ENCODE measurements at regions of chr2 and their contacts with region 1.

Region 1: DNA sequence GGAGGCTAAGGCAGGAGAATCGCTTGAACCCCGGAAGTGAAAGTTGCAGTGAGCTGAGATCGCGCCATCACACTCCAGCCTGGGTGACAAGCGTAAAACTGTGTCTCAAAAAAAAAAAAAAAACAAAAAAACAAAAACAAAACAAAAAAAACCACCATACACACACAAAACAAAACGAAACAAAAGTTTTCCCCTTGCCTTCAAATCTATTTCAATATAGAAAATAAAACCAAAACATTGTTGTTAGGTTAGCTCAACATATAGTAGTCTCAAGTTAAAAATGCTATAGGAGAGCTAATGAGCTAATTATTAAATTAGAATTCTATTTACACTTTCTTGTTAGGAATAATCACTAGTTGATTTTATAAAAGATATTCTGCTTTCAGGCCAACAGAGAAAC is 43.3 kb downstream of the FBXO11 start:
- DNase-seq: no peak
- H3K4me3 Mint-ChIP-seq: no peak overlapping the region
- H3K27ac Mint-ChIP-seq: no peak overlapping the region
- H3K4me1 Mint-ChIP-seq: peaks cover 60% of the 10 kb centered on the region
- H3K27me3 Mint-ChIP-seq: no peaks in the 10 kb centered on the region

Region 2: DNA sequence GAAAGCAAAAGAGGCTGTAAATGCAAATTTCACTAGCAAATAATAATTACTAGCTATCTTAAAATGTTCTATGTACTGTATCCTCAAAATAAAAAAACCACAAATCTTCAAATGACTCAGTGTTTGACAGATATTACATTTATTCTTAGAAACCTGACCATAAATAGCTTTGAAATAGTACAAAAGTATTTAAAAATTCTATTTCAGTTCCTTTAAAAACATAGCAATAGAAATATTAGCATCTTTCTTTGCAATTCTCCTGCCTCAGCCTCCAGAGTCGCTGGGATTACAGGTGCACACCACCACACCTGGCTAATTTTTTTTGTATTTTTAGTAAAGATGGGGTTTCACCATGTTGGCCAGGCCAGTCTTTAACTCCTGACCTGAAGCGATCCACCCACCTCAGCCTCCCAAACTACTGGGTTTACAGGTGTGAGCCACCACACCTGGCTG is 29.4 kb before region 1 on chr2:
- CTCF ChIA-PET with region 1: no interaction called
- POLR2A ChIA-PET with region 1: no interaction called
- intact Hi-C with region 1: no loop called
- DNase-seq: no peak
- H3K4me3 Mint-ChIP-seq: no peak overlapping the region
- H3K27ac Mint-ChIP-seq: no peak overlapping the region
- H3K4me1 Mint-ChIP-seq: no peaks in the 10 kb centered on the region
- H3K27me3 Mint-ChIP-seq: no peaks in the 10 kb centered on the region

Region 3: DNA sequence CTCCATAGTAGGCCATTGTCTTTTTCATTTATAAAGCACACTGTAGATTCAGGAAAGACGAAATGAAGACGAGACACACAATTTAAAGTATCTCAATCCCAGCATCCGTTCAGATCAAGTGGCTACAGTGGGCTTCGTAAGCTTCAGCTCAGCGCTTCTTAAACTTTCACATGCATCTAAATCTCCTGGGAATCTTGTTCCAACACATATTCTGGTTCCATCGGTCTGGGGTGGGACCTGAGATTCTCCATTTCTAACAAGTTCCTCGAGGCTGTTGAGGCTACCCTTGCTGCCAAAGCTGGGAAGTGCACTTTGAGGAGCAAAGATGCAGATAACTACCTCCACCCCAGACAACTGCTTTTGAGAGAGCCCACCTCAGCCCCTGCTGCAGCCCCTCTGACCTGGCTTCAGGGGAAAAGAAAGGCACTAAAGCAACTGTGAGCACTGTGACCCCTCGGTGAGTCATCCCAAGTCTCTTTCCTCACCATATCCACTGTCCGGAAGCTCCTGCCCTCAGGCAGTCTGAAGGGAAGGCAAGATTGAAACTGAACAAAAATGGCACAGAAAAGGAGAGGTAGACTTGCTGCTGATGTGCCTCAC is 244.5 kb after region 1 on chr2:
- CTCF ChIA-PET with region 1: interaction called, 63 read pairs
- POLR2A ChIA-PET with region 1: no interaction called
- intact Hi-C with region 1: loop called (anchors 1 kb)
- DNase-seq: no peak
- H3K4me3 Mint-ChIP-seq: no peak overlapping the region
- H3K27ac Mint-ChIP-seq: no peak overlapping the region
- H3K4me1 Mint-ChIP-seq: peaks cover 26% of the 10 kb centered on the region
- H3K27me3 Mint-ChIP-seq: no peaks in the 10 kb centered on the region